CD8-positive, alpha-beta memory T cell (primary cell): ENCODE measurements at regions of chr3 and their contacts with region 1.

Region 1: DNA sequence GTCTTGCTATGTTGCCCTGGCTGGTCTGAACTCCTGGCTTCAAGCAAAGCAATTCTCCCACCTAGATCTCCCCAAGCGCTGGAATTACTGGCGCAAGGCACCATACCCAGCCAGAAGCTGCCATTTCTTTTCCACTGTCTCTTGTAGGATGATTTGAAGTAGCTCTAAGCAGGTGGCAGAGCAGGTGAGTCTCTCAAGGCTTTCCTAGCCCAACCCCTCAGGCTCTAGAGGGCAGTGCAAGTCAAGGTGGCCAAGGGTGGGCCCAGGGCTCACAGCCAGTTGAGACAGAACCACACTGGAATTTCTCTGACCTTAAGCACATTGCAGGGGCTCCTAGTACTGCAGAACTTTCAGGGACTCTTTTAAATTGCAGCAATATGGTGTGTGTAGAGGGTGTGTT is 15.6 kb upstream of the DAG1 start:
- DNase-seq: no peak
- H3K4me3 ChIP-seq: no peak overlapping the region
- H3K4me3 Mint-ChIP-seq: no peak overlapping the region
- H3K27ac ChIP-seq: no peak overlapping the region
- H3K27ac Mint-ChIP-seq: peak overlapping the region in 3 of 8 donors; percentile 2 to 79 (median 61)
- H3K4me1 ChIP-seq: no peaks in the 10 kb centered on the region
- H3K4me1 Mint-ChIP-seq: no peaks in the 10 kb centered on the region
- H3K27me3 ChIP-seq: no peaks in the 10 kb centered on the region
- H3K27me3 Mint-ChIP-seq: no peaks in the 10 kb centered on the region

Region 2: DNA sequence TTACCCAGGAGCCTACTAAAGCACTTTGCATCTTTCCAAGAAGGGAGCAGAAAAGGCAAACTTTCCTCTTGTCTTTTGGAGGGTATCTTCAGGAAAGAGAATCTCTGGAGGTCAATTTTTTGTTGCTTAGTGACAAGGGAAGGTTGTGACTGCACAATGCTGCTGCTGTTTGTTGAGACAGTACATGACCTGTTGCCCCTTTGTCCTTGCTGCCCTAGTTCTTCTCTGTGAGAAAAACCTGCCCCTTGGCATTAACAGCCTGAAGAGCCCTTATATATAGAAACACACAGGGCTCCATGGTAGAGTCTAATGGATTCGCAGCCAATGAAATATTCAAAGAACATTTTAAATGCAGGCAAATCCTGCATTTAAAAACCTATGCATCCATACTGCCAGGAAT is 262.7 kb before region 1 on chr3:
- CTCF ChIA-PET with region 1: no interaction called
- POLR2A ChIA-PET with region 1: no interaction called
- DNase-seq: no peak
- H3K4me3 ChIP-seq: no peak overlapping the region
- H3K4me3 Mint-ChIP-seq: no peak overlapping the region
- H3K27ac ChIP-seq: no peak overlapping the region
- H3K27ac Mint-ChIP-seq: no peak overlapping the region
- H3K4me1 ChIP-seq: no peaks in the 10 kb centered on the region
- H3K4me1 Mint-ChIP-seq: no peaks in the 10 kb centered on the region
- H3K27me3 ChIP-seq: no peaks in the 10 kb centered on the region
- H3K27me3 Mint-ChIP-seq: peaks cover 5 to 23% of the 10 kb centered on the region in 2 donors

Region 3: DNA sequence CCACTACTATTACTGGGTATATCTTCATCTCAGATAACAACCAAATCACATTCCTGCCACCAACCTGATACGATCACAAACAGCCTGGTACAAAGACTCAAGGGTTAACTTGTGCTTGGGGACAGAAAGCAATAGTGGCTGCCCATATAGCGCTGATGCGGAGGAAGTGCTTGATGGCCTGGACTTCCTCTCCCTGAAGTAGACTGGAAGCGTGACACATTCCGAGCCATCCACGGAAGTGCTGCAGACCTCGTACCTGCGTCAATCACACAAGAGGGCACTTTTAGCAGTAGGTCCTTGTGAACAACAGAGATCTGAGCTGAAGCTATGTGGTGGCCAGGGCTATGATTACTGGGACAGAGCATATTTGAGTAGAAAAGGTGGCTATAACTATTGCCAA is 160.1 kb before region 1 on chr3:
- CTCF ChIA-PET with region 1: interaction called, 14 read pairs
- POLR2A ChIA-PET with region 1: no interaction called
- DNase-seq: no peak
- H3K4me3 ChIP-seq: no peak overlapping the region
- H3K4me3 Mint-ChIP-seq: no peak overlapping the region
- H3K27ac ChIP-seq: no peak overlapping the region
- H3K27ac Mint-ChIP-seq: peak overlapping the region in 2 of 8 donors; percentile 12 to 15
- H3K4me1 ChIP-seq: no peaks in the 10 kb centered on the region
- H3K4me1 Mint-ChIP-seq: no peaks in the 10 kb centered on the region
- H3K27me3 ChIP-seq: no peaks in the 10 kb centered on the region
- H3K27me3 Mint-ChIP-seq: no peaks in the 10 kb centered on the region

Region 4: DNA sequence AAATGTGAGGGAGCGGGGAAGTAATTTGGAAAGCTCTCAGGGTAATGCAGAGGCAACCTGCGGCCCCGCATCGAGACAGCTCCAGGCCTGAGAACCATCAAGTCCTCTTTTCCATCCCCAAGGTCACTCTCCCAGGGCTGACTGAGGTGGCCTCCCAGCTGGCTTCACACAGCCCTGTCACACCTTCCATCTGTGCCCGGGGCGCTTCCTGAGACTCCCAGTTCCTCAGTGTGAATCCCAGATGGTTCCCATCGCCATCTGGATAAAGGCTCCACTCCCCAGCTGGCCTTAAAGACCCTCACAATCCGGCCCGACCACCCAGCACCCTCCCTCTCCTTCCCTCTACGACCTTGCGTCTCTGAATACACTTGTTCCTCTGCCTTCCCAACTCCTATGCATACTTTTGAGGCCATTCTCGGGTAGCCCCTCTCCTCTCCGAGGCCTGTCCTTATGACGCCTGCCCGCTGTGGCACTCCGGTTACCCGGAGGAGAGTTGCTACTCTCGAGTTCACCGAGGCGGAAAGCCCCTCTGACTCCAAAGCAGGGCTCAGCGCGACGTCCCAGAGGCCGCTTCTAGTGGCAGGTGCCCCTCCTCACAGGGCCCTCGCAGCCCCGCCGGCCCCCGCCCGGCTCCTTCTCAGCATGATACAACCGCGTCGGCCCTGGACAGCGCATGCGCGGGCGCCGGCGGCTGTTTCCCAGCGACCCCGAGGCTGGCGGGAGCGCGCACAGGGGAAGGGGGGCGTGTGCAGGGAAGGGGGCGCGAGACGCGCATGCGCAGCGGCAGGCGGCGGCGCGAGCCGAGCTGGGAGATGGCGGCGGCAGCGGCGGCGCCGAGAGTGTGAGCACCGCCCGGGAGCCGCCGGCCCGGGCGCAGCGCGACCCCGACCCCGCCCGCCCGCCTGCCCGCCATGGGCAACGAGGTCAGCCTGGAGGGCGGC is 99.5 kb after region 1 on chr3 and contains the start of gene BSN:
- CTCF ChIA-PET with region 1: no interaction called
- POLR2A ChIA-PET with region 1: no interaction called
- DNase-seq: peak; percentile 84 to 95 (median 90)
- H3K4me3 ChIP-seq: peak within 1 kb of the TSS; percentile 85
- H3K4me3 Mint-ChIP-seq: peak within 1 kb of the TSS; percentile 82 to 91 (median 87)
- H3K27ac ChIP-seq: peak within 1 kb of the TSS; percentile 16
- H3K27ac Mint-ChIP-seq: peak within 1 kb of the TSS in 6 of 8 donors; percentile 21 to 87 (median 56)
- H3K4me1 ChIP-seq: peaks cover 18% of the 10 kb centered on the region
- H3K4me1 Mint-ChIP-seq: peaks cover 16 to 32% (median 29%) of the 10 kb centered on the region in 3 donors
- H3K27me3 ChIP-seq: no peaks in the 10 kb centered on the region
- H3K27me3 Mint-ChIP-seq: peaks cover 4 to 33% of the 10 kb centered on the region in 2 donors
- total RNA-seq, gene BSN: 0.33 to 0.46 TPM

Region 5: DNA sequence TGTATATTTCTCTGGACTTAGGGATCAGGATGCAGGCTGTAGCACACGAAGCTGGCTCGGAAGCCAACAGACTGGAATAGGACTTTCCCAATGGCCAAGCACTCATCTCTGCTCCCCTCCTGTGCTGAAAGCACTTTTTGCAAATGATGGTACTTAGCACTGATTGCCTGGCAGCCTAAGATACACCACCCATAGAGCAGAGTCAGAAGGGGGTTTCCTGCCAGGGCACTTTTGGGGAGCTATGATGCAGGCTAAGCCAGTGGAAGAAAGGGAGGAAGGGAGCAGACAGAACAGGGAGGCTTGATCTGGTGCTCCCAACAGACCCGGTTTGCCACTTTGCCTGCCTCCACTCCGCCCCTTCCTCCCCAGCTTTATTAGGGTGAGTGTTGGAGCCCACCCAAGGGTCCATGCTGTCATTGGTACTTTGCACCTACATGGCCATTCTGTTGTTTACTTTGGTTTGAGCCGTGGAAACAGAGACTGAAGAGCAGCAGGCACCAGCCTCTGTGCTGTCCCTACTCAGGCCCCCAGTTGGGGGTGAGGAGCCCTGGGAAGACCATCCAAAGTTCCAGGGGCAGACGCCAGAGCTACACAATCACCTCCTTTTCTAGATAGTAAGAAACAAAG is 115.7 kb after region 1 on chr3:
- CTCF ChIA-PET with region 1: no interaction called
- POLR2A ChIA-PET with region 1: no interaction called
- DNase-seq: no peak
- H3K4me3 ChIP-seq: no peak overlapping the region
- H3K4me3 Mint-ChIP-seq: no peak overlapping the region
- H3K27ac ChIP-seq: no peak overlapping the region
- H3K27ac Mint-ChIP-seq: no peak overlapping the region
- H3K4me1 ChIP-seq: no peaks in the 10 kb centered on the region
- H3K4me1 Mint-ChIP-seq: no peaks in the 10 kb centered on the region
- H3K27me3 ChIP-seq: no peaks in the 10 kb centered on the region
- H3K27me3 Mint-ChIP-seq: peaks cover 0 to 5% of the 10 kb centered on the region in 2 donors

Region 6: GRCh38 chr3:49582177-49582576 is 127.7 kb after region 1 on chr3:
- CTCF ChIA-PET with region 1: no interaction called
- POLR2A ChIA-PET with region 1: no interaction called
- DNase-seq: no peak
- H3K4me3 ChIP-seq: no peak overlapping the region
- H3K4me3 Mint-ChIP-seq: no peak overlapping the region
- H3K27ac ChIP-seq: no peak overlapping the region
- H3K27ac Mint-ChIP-seq: no peak overlapping the region
- H3K4me1 ChIP-seq: no peaks in the 10 kb centered on the region
- H3K4me1 Mint-ChIP-seq: no peaks in the 10 kb centered on the region
- H3K27me3 ChIP-seq: no peaks in the 10 kb centered on the region
- H3K27me3 Mint-ChIP-seq: peaks cover 0 to 4% of the 10 kb centered on the region in 2 donors